ENCODE measurements at regions of chr4 and their contacts with region 1.

Region 1: GRCh38 chr4:2862528-2862927 is 18.9 kb downstream of the ADD1 start:
- DNase-seq: no peak
- ATAC-seq: no peak
- H3K4me3 Mint-ChIP-seq: peak overlapping the region; percentile 46
- H3K27ac Mint-ChIP-seq: peak overlapping the region; percentile 77
- H3K4me1 Mint-ChIP-seq: peaks cover 92% of the 10 kb centered on the region
- H3K27me3 Mint-ChIP-seq: no peaks in the 10 kb centered on the region
- CTCF ChIP-seq: no peak

Region 2: DNA sequence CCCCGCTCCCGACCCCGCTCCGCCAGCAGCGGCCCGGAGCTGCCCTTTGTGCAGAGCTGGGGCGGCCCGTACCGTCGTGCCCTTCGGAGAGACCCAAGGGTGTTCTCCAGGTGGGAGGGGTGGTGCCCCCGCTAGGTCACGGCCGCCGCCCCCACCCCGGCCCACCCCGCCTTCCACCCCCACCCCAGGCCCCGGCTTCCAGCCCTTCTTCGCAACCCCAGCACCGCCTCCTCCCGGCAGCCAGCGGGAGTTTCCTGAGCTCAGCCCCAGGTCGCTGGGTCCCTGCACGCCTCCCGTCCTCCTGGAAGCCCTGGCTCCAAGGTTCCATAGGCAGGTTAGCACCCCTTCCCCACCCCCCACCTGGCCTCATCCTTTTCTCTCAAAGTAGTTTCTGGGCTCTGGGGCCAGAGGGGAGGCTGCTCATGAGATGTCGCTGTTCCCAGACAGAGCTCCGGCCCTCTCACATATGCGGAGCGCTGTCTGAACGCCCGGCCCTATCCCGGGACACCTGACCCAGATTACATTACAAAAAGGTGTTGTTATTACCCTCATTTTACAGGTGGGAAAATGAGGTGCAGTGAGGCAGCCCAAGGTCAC is 1094.7 kb before region 1 on chr4:
- CTCF ChIA-PET with region 1: no interaction called
- POLR2A ChIA-PET with region 1: no interaction called
- intact Hi-C with region 1: no loop called
- DNase-seq: no peak
- ATAC-seq: peak; percentile 43
- H3K4me3 Mint-ChIP-seq: peak overlapping the region; percentile 66
- H3K27ac Mint-ChIP-seq: no peak overlapping the region
- H3K4me1 Mint-ChIP-seq: peaks cover 17% of the 10 kb centered on the region
- H3K27me3 Mint-ChIP-seq: peaks cover 5% of the 10 kb centered on the region
- CTCF ChIP-seq: no peak

Region 3: GRCh38 chr4:2843263-2843940 is 19.1 kb before region 1 on chr4 and contains the start of gene ADD1:
- CTCF ChIA-PET with region 1: interaction called, 3 read pairs
- POLR2A ChIA-PET with region 1: interaction called, 6 read pairs
- intact Hi-C with region 1: loop called (anchors 2 kb)
- DNase-seq: peak; percentile 100
- ATAC-seq: peak; percentile 87
- H3K4me3 Mint-ChIP-seq: peak within 1 kb of the TSS; percentile 96
- H3K27ac Mint-ChIP-seq: peak within 1 kb of the TSS; percentile 94
- H3K4me1 Mint-ChIP-seq: peaks cover 61% of the 10 kb centered on the region
- H3K27me3 Mint-ChIP-seq: no peaks in the 10 kb centered on the region
- CTCF ChIP-seq: no peak
- total RNA-seq, gene ADD1: 326 and 340 TPM in 2 replicates

Region 4: GRCh38 chr4:2893772-2894171 is 31.2 kb after region 1 on chr4:
- CTCF ChIA-PET with region 1: no interaction called
- POLR2A ChIA-PET with region 1: no interaction called
- intact Hi-C with region 1: no loop called
- DNase-seq: no peak
- ATAC-seq: no peak
- H3K4me3 Mint-ChIP-seq: no peak overlapping the region
- H3K27ac Mint-ChIP-seq: no peak overlapping the region
- H3K4me1 Mint-ChIP-seq: peaks cover 4% of the 10 kb centered on the region
- H3K27me3 Mint-ChIP-seq: no peaks in the 10 kb centered on the region
- CTCF ChIP-seq: no peak

Region 5: GRCh38 chr4:2907706-2908306 is 45.3 kb after region 1 on chr4:
- CTCF ChIA-PET with region 1: no interaction called
- POLR2A ChIA-PET with region 1: no interaction called
- intact Hi-C with region 1: loop called (anchors 5 kb)
- DNase-seq: no peak
- ATAC-seq: no peak
- H3K4me3 Mint-ChIP-seq: no peak overlapping the region
- H3K27ac Mint-ChIP-seq: no peak overlapping the region
- H3K4me1 Mint-ChIP-seq: peaks cover 7% of the 10 kb centered on the region
- H3K27me3 Mint-ChIP-seq: no peaks in the 10 kb centered on the region
- CTCF ChIP-seq: no peak

Region 6: GRCh38 chr4:3074078-3074795 is 211.7 kb after region 1 on chr4 and contains the starts of genes HTT and HTT-AS:
- CTCF ChIA-PET with region 1: no interaction called
- POLR2A ChIA-PET with region 1: no interaction called
- intact Hi-C with region 1: no loop called
- DNase-seq: peak; percentile 93
- ATAC-seq: peak; percentile 77
- H3K4me3 Mint-ChIP-seq: peak within 1 kb of the TSS; percentile 92
- H3K27ac Mint-ChIP-seq: peak within 1 kb of the TSS; percentile 95
- H3K4me1 Mint-ChIP-seq: peaks cover 39% of the 10 kb centered on the region
- H3K27me3 Mint-ChIP-seq: no peaks in the 10 kb centered on the region
- CTCF ChIP-seq: no peak
- total RNA-seq, gene HTT: 239 and 242 TPM in 2 replicates
- total RNA-seq, gene HTT-AS: not detected in 2 replicates

Measured in activated B cell treated with CpG ODN at 0.5 μM for 24 hours (primary cell).